Activated CD4-positive, alpha-beta memory T cell treated with anti-CD3 and anti-CD28 coated beads for 36 hours (primary cell): ENCODE measurements at regions of chr3 and their contacts with region 1.

Region 1: GRCh38 chr3:149812606-149813366 is at the start of gene RNF13:
- DNase-seq: peak; percentile 95
- H3K4me3 Mint-ChIP-seq: peak within 1 kb of the TSS; percentile 90
- H3K27ac Mint-ChIP-seq: peak within 1 kb of the TSS; percentile 98
- H3K4me1 Mint-ChIP-seq: peaks cover 41% of the 10 kb centered on the region
- H3K27me3 Mint-ChIP-seq: peaks cover 3% of the 10 kb centered on the region
- total RNA-seq, gene RNF13: 29.4 to 31.5 TPM

Region 2: GRCh38 chr3:149448331-149448831 is 364.4 kb before region 1 on chr3:
- CTCF ChIA-PET with region 1: no interaction called
- POLR2A ChIA-PET with region 1: no interaction called
- intact Hi-C with region 1: no loop called
- DNase-seq: no peak
- H3K4me3 Mint-ChIP-seq: no peak overlapping the region
- H3K27ac Mint-ChIP-seq: no peak overlapping the region
- H3K4me1 Mint-ChIP-seq: no peaks in the 10 kb centered on the region
- H3K27me3 Mint-ChIP-seq: peaks cover 5% of the 10 kb centered on the region

Region 3: GRCh38 chr3:149512209-149512782 is 300.5 kb before region 1 on chr3:
- CTCF ChIA-PET with region 1: interaction called, 15 read pairs
- POLR2A ChIA-PET with region 1: no interaction called
- intact Hi-C with region 1: loop called (anchors 1 kb)
- DNase-seq: peak; percentile 51
- H3K4me3 Mint-ChIP-seq: no peak overlapping the region
- H3K27ac Mint-ChIP-seq: no peak overlapping the region
- H3K4me1 Mint-ChIP-seq: peaks cover 10% of the 10 kb centered on the region
- H3K27me3 Mint-ChIP-seq: peaks cover 15% of the 10 kb centered on the region

Region 4: GRCh38 chr3:149581681-149582370 is 231.0 kb before region 1 on chr3:
- CTCF ChIA-PET with region 1: no interaction called
- POLR2A ChIA-PET with region 1: no interaction called
- intact Hi-C with region 1: loop called (anchors 2 kb)
- DNase-seq: peak; percentile 29
- H3K4me3 Mint-ChIP-seq: no peak overlapping the region
- H3K27ac Mint-ChIP-seq: no peak overlapping the region
- H3K4me1 Mint-ChIP-seq: peaks cover 16% of the 10 kb centered on the region
- H3K27me3 Mint-ChIP-seq: peaks cover 20% of the 10 kb centered on the region

Region 5: DNA sequence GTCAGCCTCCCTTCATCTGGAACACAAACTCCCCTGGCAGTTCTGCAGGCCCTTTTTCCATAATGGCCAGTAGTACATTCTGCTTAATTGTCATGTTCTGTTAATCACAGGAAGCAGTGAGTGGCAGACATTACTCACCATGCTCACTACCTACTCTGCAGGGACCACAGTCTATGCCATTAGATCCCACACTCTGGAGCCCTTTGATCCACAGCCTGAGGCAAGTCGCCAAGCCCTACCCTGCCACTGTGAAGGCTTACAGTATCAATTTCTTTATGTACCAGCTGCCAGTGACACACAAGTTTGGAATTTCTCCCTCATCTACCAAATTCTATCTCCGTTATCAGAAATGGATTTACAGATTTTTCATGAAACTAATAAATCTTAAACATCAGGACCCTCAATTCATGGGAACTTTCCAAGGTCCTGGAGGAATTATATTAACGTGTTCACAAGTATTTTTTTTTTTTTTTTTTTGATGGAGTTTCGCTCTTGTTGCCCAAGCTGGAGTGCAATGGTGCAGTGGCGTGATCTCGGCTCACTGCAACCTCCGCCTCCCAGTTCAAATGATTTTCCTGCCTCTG is 134.3 kb before region 1 on chr3:
- CTCF ChIA-PET with region 1: no interaction called
- POLR2A ChIA-PET with region 1: no interaction called
- intact Hi-C with region 1: no loop called
- DNase-seq: no peak
- H3K4me3 Mint-ChIP-seq: no peak overlapping the region
- H3K27ac Mint-ChIP-seq: no peak overlapping the region
- H3K4me1 Mint-ChIP-seq: no peaks in the 10 kb centered on the region
- H3K27me3 Mint-ChIP-seq: peaks cover 3% of the 10 kb centered on the region

Region 6: GRCh38 chr3:149771652-149772271 is 41.0 kb before region 1 on chr3:
- CTCF ChIA-PET with region 1: interaction called, 26 read pairs
- POLR2A ChIA-PET with region 1: no interaction called
- intact Hi-C with region 1: no loop called
- DNase-seq: peak; percentile 45
- H3K4me3 Mint-ChIP-seq: no peak overlapping the region
- H3K27ac Mint-ChIP-seq: no peak overlapping the region
- H3K4me1 Mint-ChIP-seq: no peaks in the 10 kb centered on the region
- H3K27me3 Mint-ChIP-seq: peaks cover 14% of the 10 kb centered on the region

Region 7: DNA sequence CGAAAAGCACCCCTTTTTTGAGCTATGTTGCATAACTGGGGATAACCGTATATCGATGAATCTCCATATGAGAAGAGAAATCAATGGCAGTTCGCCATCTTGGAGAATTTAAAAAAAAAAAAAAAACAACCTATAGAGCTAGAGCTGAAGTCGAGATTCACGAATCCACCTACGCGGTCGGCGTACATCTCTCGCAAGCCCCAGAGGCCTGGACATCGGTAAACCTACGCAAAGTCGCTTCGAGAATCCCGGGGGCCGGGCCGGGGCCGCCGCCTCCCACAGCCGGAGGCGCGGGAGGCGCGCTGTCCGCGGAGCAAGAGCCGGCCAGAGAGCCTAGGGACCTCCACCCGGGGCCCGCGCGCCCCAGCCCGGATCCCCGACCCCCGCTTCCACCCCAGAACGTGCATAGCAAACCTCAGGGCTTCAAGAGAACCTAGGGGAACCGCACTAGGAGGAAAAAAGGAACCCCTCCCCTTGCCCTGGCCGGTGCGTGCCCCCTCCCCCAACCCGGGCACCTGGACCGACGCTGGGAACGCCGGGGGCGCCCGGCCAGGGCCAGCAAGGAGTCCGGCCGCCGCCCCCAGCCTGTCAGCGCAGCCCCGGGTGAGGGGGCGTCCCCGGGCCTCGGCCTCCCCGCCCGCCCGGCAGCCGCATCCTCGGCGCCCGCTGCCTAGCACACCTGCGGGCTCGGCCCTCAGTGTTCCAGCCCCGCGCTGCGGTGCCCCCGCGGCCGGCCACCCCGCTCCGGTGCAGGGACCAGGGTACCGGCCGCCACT is 157.3 kb after region 1 on chr3:
- CTCF ChIA-PET with region 1: no interaction called
- POLR2A ChIA-PET with region 1: no interaction called
- intact Hi-C with region 1: loop called (anchors 2 kb)
- DNase-seq: peak; percentile 83
- H3K4me3 Mint-ChIP-seq: peak overlapping the region; percentile 77
- H3K27ac Mint-ChIP-seq: no peak overlapping the region
- H3K4me1 Mint-ChIP-seq: peaks cover 11% of the 10 kb centered on the region
- H3K27me3 Mint-ChIP-seq: peaks cover 21% of the 10 kb centered on the region